SK-N-SH (cell line): ENCODE measurements at regions of chr11 and their contacts with region 1.

Region 1: GRCh38 chr11:3091791-3092602 is 34.8 kb upstream of the CARS1 start:
- DNase-seq: peak; percentile 93
- H3K4me3 ChIP-seq: no peak overlapping the region; a peak in 1 of 4 replicates
- H3K27ac ChIP-seq: no peak overlapping the region
- H3K4me1 ChIP-seq: peaks cover 0 to 9% of the 10 kb centered on the region in 2 experiments; a peak in 2 of 4 replicates
- H3K27me3 ChIP-seq: no peaks in the 10 kb centered on the region
- CTCF ChIP-seq: peak; percentile 95
- EP300 ChIP-seq: no peak
- RAD21 ChIP-seq: peak; percentile 84

Region 2: DNA sequence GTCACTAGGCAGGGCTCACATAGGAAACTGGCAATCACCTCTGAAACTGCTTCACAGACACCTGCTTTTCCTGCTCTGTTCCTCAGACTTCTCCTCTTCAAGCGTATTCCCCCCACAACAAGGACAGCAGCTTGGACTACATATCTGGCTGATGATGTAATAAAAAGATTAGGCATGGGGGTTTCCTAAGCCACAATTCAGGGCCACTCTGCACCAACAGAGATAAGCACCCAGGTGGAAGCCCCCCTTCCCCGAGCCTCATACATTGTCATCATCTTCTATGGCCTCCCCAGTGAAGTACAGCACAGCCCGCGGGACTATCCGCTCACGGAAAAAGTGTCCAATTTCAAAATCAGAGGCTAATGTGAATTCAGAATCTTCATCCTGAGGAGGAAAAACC is 137.7 kb before region 1 on chr11:
- CTCF ChIA-PET with region 1: interaction called, 10 read pairs
- POLR2A ChIA-PET with region 1: no interaction called
- DNase-seq: no peak
- H3K4me3 ChIP-seq: no peak overlapping the region
- H3K27ac ChIP-seq: no peak overlapping the region
- H3K4me1 ChIP-seq: peaks cover 0 to 24% of the 10 kb centered on the region in 2 experiments; a peak in 3 of 4 replicates
- H3K27me3 ChIP-seq: no peaks in the 10 kb centered on the region
- CTCF ChIP-seq: no peak
- EP300 ChIP-seq: no peak
- RAD21 ChIP-seq: no peak

Region 3: DNA sequence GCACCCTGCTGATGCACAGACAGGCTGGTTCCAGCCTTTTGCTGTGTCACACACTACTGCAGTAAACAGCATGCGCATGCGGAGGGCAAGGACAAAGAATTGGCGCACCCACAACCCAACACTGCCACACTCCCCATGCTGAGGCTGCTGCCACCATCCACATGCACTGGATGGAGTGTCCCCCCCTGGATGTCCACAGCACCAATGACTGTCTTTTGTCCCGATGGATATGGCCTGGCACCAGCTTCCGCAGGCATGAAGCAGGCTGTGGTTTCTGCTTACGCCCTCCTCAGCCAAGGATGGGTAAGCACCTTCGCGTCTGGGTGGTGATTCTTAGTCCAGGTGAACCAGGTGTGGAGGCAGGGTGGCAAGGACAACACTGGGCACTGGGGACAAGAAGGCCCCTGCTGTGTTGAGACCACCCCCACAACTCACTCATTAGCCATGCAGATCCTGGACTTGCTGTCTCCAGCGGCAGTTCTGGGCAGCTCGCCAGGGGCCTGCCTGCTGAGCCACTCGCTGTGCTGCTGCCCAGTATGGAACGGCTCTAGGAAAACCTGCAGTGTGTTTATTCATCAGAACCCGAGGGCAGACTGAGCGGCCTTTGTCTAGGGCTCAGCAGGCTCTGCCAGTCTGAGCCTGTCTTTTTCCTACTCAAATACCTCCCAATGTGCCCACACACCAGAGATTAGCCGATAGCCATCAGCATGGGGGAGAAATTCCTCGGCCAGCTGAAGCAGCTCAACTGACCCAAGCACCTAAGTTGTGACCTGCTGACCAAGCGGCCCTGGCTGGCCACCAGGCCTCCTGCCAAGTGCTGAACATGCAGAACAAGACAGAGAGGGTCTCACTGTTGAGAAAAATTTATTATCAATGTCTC is 91.7 kb before region 1 on chr11:
- CTCF ChIA-PET with region 1: interaction called, 13 read pairs
- POLR2A ChIA-PET with region 1: interaction called, 3 read pairs
- DNase-seq: peak; percentile 88
- H3K4me3 ChIP-seq: no peak overlapping the region; a peak in 1 of 4 replicates
- H3K27ac ChIP-seq: peak overlapping the region; percentile 55 to 98
- H3K4me1 ChIP-seq: peaks cover 19 to 43% of the 10 kb centered on the region in 2 experiments
- H3K27me3 ChIP-seq: no peaks in the 10 kb centered on the region
- CTCF ChIP-seq: no peak
- EP300 ChIP-seq: peak; percentile 32 to 40; a peak in 1 of 4 replicates
- RAD21 ChIP-seq: 0 out of 2 replicates have a peak, but pooled peaks have one; percentile 12

Region 4: GRCh38 chr11:3049430-3050243 is 42.4 kb before region 1 on chr11:
- CTCF ChIA-PET with region 1: interaction called, 403 read pairs
- POLR2A ChIA-PET with region 1: no interaction called
- DNase-seq: peak; percentile 39
- H3K4me3 ChIP-seq: peak overlapping the region in 1 of 2 experiments; percentile 21; a peak in 1 of 4 replicates
- H3K27ac ChIP-seq: peak overlapping the region; percentile 79
- H3K4me1 ChIP-seq: peaks cover 18 to 52% of the 10 kb centered on the region in 2 experiments
- H3K27me3 ChIP-seq: no peaks in the 10 kb centered on the region
- CTCF ChIP-seq: peak; percentile 42
- EP300 ChIP-seq: no peak; a peak in 1 of 4 replicates
- RAD21 ChIP-seq: no peak; the same call in 1 of the 2 replicates

Region 5: GRCh38 chr11:3104051-3104714 is 12.2 kb after region 1 on chr11:
- CTCF ChIA-PET with region 1: interaction called, 13 read pairs
- POLR2A ChIA-PET with region 1: no interaction called
- DNase-seq: peak; percentile 34
- H3K4me3 ChIP-seq: no peak overlapping the region
- H3K27ac ChIP-seq: no peak overlapping the region
- H3K4me1 ChIP-seq: no peaks in the 10 kb centered on the region
- H3K27me3 ChIP-seq: no peaks in the 10 kb centered on the region
- CTCF ChIP-seq: no peak
- EP300 ChIP-seq: no peak
- RAD21 ChIP-seq: no peak

Region 6: DNA sequence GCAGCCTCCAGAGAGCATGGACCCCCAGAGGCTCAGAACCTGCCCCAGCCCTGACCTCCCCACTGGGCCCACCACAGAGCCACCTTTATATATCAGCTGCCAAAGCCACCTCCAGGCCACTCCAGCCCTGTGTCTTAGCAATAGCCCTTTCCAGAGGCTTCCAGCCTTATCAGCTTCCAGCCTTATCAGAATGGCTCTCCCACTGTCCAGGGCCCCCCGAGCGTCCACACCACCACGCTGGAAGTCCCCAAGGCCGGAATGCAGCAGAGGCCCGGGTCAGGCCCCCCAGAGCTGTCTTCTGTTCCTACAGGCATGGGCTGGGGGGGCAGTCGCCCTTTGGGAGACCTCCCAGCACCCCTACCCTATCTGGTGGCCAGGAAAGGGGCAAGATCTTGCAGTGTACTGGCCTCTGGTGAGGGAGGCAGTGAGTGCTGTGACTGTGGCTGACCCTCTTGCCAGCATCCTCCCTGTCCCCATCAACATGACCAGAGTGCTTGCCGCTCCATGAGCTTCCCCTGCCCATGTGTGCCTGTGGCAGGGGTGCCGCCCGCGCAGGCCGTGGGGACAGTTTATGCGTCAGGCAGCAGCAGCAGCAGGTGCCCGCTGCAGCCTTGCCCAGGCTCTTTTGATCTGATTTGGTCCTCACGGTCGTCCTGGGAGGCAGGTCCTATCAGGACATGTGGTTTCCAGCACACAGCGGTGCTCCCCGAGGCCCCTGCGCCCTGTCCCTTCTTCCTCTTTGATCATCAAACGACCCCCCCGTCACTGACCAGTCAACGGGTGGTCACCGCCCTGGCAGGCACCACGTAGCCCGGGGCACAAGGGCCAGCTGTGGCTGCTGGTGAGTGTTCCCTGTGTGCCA is 57.2 kb after region 1 on chr11:
- CTCF ChIA-PET with region 1: interaction called, 12 read pairs
- POLR2A ChIA-PET with region 1: no interaction called
- DNase-seq: peak; percentile 90
- H3K4me3 ChIP-seq: no peak overlapping the region; a peak in 1 of 4 replicates
- H3K27ac ChIP-seq: peak overlapping the region in 1 of 2 experiments; percentile 78; a peak in 2 of 4 replicates
- H3K4me1 ChIP-seq: peaks cover 0 to 47% of the 10 kb centered on the region in 2 experiments; a peak in 2 of 4 replicates
- H3K27me3 ChIP-seq: no peaks in the 10 kb centered on the region
- CTCF ChIP-seq: no peak
- EP300 ChIP-seq: peak in 1 of 2 experiments; percentile 80; a peak in 2 of 4 replicates
- RAD21 ChIP-seq: peak; percentile 19

Region 7: DNA sequence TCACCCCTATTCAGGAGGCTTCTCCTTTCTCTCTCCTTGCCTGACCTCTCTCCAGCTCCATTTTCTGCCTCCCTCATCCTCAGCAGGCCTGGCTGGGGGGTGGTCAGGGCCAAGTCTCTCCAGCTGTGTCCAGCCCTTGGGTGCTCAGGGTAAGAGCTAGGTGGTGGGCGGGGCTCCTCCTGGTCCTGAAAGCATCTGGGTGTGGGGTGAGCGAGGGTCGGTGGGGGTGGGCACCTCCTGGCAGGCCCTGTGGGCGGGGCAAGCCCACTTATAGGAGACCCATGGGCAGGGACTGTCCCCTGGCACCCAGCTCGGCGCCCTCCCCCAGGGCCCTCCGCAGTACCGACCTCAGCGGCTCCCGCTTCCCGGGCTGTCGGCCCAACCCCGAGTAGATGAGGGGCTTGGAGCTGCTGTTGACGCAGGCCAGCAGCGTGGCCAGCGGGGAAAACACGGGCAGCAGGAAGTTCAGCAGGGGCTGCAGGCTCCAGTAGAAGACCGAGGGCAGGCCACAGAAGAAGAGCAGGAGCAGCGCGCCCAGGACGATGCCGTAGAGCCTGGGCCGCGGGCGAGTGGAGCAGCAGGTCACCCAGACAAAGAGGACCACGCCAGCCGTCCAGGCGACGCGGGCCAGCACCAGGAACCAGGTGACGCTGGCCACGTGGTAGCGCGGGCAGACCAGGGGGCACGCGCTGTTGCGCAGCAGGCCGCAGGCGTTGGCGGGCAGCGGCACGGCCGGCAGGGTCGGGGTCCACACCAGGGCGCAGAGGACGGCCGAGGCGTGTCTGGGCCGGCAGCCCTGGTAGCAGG is 125.9 kb after region 1 on chr11:
- CTCF ChIA-PET with region 1: interaction called, 48 read pairs
- POLR2A ChIA-PET with region 1: interaction called, 3 read pairs
- DNase-seq: peak; percentile 34
- H3K4me3 ChIP-seq: no peak overlapping the region
- H3K27ac ChIP-seq: no peak overlapping the region
- H3K4me1 ChIP-seq: no peaks in the 10 kb centered on the region; a peak in 1 of 4 replicates
- H3K27me3 ChIP-seq: no peaks in the 10 kb centered on the region
- CTCF ChIP-seq: no peak
- EP300 ChIP-seq: no peak
- RAD21 ChIP-seq: no peak